ENCODE measurements at regions of chr12 and their contacts with region 1.

Region 1: DNA sequence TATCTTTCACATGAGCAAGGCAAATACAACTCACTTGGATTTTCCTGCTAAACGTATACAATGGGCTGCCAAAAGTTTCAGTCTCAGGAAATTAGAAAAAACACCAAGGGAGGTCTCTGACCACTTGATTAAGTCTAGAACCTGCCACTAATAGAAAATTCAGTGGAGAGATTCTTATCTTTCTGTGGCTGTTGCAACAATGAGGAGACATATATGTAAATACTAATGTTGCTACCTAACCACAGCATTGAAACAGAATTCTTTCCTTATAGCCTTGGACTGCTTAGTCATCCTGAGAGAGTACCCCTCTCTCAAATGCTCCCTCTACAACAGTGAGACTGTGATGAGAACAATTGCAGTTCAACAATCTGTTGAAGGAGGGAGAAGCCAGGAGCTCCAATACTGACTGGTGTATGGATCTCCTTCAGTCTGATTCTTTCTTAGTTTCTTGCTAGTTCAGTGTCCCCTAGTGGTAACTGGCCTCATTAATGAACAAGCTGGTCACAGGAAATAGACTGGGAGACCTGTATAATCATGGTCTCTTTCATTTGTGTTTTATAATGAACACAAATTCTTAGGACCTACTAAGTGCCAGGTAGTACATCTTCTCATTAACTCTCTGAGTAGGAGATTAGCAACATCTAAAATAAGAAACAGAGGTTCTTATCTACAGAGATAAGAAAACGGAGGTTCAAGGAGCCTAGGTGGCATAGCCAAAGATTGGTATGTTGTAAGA is 164.5 kb downstream of the SLC38A4 start:
- DNase-seq: peak; percentile 70
- ATAC-seq: peak; percentile 88
- H3K4me3 ChIP-seq: peak overlapping the region in 3 of 5 experiments; percentile 1 to 16 (median 7)
- H3K4me3 Mint-ChIP-seq: peak overlapping the region; percentile 29
- H3K27ac ChIP-seq: no peak overlapping the region
- H3K27ac Mint-ChIP-seq: peak overlapping the region; percentile 64
- H3K4me1 ChIP-seq: peaks cover 21 to 27% of the 10 kb centered on the region in 2 donors
- H3K4me1 Mint-ChIP-seq: peaks cover 28% of the 10 kb centered on the region
- H3K27me3 ChIP-seq: no peaks in the 10 kb centered on the region
- H3K27me3 Mint-ChIP-seq: no peaks in the 10 kb centered on the region
- CTCF ChIP-seq: peak; percentile 70

Region 2: GRCh38 chr12:46364777-46365580 is 296.3 kb before region 1 on chr12:
- CTCF ChIA-PET with region 1: interaction called, 10 read pairs
- POLR2A ChIA-PET with region 1: no interaction called
- intact Hi-C with region 1: no loop called
- DNase-seq: no peak
- ATAC-seq: no peak
- H3K4me3 ChIP-seq: no peak overlapping the region
- H3K4me3 Mint-ChIP-seq: no peak overlapping the region
- H3K27ac ChIP-seq: peak overlapping the region in 1 of 2 donors; percentile 23
- H3K27ac Mint-ChIP-seq: no peak overlapping the region
- H3K4me1 ChIP-seq: peaks cover 39 to 46% of the 10 kb centered on the region in 2 donors
- H3K4me1 Mint-ChIP-seq: peaks cover 64% of the 10 kb centered on the region
- H3K27me3 ChIP-seq: no peaks in the 10 kb centered on the region
- H3K27me3 Mint-ChIP-seq: no peaks in the 10 kb centered on the region
- CTCF ChIP-seq: no peak

Region 3: DNA sequence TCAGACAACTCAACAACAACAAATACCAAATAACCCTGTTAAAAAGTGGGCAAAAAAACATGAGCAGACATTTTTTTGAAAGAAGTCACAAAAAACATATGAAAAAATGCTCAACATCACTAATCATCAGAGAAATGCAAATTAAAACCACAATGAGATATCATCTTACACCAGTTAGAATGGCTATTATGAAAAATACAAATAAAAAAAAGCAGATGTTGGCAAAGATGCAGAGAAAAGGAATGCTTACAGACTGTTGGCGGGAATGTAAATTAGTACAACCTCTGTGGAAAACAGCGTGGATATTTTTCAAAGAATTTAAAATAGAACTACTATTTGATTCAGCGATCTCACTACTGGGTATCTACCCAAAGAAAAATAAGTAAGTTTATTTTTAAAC is 50.5 kb after region 1 on chr12:
- CTCF ChIA-PET with region 1: no interaction called
- POLR2A ChIA-PET with region 1: no interaction called
- intact Hi-C with region 1: no loop called
- DNase-seq: no peak
- ATAC-seq: no peak
- H3K4me3 ChIP-seq: no peak overlapping the region
- H3K4me3 Mint-ChIP-seq: no peak overlapping the region
- H3K27ac ChIP-seq: no peak overlapping the region
- H3K27ac Mint-ChIP-seq: no peak overlapping the region
- H3K4me1 ChIP-seq: no peaks in the 10 kb centered on the region
- H3K4me1 Mint-ChIP-seq: no peaks in the 10 kb centered on the region
- H3K27me3 ChIP-seq: no peaks in the 10 kb centered on the region
- H3K27me3 Mint-ChIP-seq: no peaks in the 10 kb centered on the region
- CTCF ChIP-seq: no peak

Region 4: GRCh38 chr12:46921048-46921763 is 259.9 kb after region 1 on chr12:
- CTCF ChIA-PET with region 1: no interaction called
- POLR2A ChIA-PET with region 1: no interaction called
- intact Hi-C with region 1: no loop called
- DNase-seq: no peak
- ATAC-seq: no peak
- H3K4me3 ChIP-seq: no peak overlapping the region
- H3K4me3 Mint-ChIP-seq: no peak overlapping the region
- H3K27ac ChIP-seq: no peak overlapping the region
- H3K27ac Mint-ChIP-seq: no peak overlapping the region
- H3K4me1 ChIP-seq: peaks cover 0 to 7% of the 10 kb centered on the region in 2 donors
- H3K4me1 Mint-ChIP-seq: peaks cover 4% of the 10 kb centered on the region
- H3K27me3 ChIP-seq: no peaks in the 10 kb centered on the region
- H3K27me3 Mint-ChIP-seq: peaks cover 6% of the 10 kb centered on the region
- CTCF ChIP-seq: no peak

Region 5: DNA sequence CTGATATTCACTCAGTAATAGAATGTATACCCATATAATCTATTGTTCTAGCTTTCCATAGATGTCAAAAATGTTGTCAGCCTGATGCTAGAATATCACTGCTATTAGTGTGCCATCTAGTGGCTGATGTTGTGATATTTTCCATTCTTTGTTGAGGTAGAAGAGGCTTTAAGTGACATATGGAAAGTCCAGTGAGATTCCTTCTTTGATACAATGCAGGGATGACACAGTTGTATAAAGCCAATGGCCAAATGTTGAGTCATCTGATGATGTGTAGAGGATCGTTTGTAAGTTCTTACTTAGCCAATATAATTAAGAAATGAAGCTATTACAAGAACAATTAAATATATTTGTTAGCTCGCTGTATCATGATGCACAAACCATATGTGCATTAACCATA is 360.0 kb after region 1 on chr12:
- CTCF ChIA-PET with region 1: no interaction called
- POLR2A ChIA-PET with region 1: no interaction called
- intact Hi-C with region 1: loop called (anchors 10 kb)
- DNase-seq: peak; percentile 70
- ATAC-seq: peak; percentile 28
- H3K4me3 ChIP-seq: no peak overlapping the region
- H3K4me3 Mint-ChIP-seq: no peak overlapping the region
- H3K27ac ChIP-seq: no peak overlapping the region
- H3K27ac Mint-ChIP-seq: no peak overlapping the region
- H3K4me1 ChIP-seq: no peaks in the 10 kb centered on the region
- H3K4me1 Mint-ChIP-seq: no peaks in the 10 kb centered on the region
- H3K27me3 ChIP-seq: peaks cover 0 to 3% (median under 1%) of the 10 kb centered on the region in 4 experiments
- H3K27me3 Mint-ChIP-seq: peaks cover 9% of the 10 kb centered on the region
- CTCF ChIP-seq: peak; percentile 88

Measured in B cell (primary cell).